Activated T-helper 1 cell treated with anti-CD3 and anti-CD28 coated beads, Interleukin-12 subunit alpha, Interleukin-12 subunit beta, Interleukin-2, Interleukin-4 antibody, amounts not matched to agents 30 ng/mL and 10 ng/mL and 1 ng/mL, durations not matched to agents 14 hours and 24 hours and 36 hours (primary cell): ENCODE measurements at regions of chr1 and their contacts with region 1.

Region 1: DNA sequence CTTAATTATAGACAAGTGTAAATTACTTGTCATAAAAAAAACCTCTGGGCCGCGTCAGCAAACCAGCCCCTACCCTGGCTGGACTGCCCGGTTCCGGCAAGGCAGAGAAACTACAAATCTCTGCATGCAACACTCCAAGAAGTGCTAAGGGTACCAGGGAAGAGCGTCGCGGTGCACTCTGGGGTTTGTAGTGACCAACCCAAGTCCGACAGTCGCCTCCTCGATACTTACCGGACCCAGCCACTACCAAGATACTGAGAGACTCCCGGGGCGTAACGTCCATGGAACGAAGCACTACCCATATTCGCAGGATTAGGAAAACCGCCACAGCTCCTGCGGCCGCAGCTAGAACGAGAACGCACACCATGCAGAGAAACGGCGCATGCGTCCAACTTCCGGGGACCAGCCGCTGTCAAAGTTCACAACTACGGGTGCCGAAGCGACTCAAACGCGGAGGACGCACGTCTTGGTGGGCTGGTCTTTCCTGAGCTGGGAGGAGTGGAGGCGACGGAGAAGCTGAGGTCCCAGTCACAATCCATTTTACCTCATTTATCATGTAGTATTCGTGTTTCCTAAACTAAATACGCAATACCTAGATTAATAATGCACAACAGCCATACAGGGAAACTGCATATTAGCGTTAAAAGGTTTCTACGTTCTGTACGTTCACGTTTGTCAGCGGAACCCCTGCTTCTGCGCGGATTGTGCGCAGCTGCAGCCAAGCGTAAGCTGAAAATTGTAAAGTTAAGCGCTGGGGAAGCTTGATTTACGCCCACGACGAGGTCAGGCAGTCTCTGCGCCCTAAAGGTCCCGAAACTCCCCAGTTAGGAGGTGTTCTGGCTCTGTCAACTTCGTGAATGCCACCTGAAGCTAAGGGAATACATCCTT is at the start of gene ALG14:
- DNase-seq: peak; percentile 85
- H3K4me3 Mint-ChIP-seq: peak within 1 kb of the TSS; percentile 94
- H3K27ac Mint-ChIP-seq: peak within 1 kb of the TSS; percentile 93
- H3K4me1 Mint-ChIP-seq: peaks cover 18% of the 10 kb centered on the region
- H3K27me3 Mint-ChIP-seq: no peaks in the 10 kb centered on the region
- total RNA-seq, gene ALG14: 1.9 and 2.4 TPM in 2 replicates

Region 2: GRCh38 chr1:94417978-94418663 is 654.7 kb before region 1 on chr1 and contains the start of gene ABCD3:
- intact Hi-C with region 1: loop called (anchors 1 kb)
- DNase-seq: peak; percentile 96
- H3K4me3 Mint-ChIP-seq: peak within 1 kb of the TSS; percentile 89
- H3K27ac Mint-ChIP-seq: peak within 1 kb of the TSS; percentile 68
- H3K4me1 Mint-ChIP-seq: peaks cover 31% of the 10 kb centered on the region
- H3K27me3 Mint-ChIP-seq: peaks cover 15% of the 10 kb centered on the region
- total RNA-seq, gene ABCD3: 25.7 and 28.2 TPM in 2 replicates

Region 3: GRCh38 chr1:94962409-94963265 is 110.1 kb before region 1 on chr1:
- intact Hi-C with region 1: loop called (anchors 5 kb)
- DNase-seq: peak; percentile 19
- H3K4me3 Mint-ChIP-seq: peak overlapping the region; percentile 89
- H3K27ac Mint-ChIP-seq: peak overlapping the region; percentile 92
- H3K4me1 Mint-ChIP-seq: peaks cover 5% of the 10 kb centered on the region
- H3K27me3 Mint-ChIP-seq: no peaks in the 10 kb centered on the region

Region 4: GRCh38 chr1:95116580-95117206 is 43.9 kb after region 1 on chr1:
- intact Hi-C with region 1: loop called (anchors 1 kb)
- DNase-seq: no peak
- H3K4me3 Mint-ChIP-seq: peak overlapping the region; percentile 84
- H3K27ac Mint-ChIP-seq: no peak overlapping the region
- H3K4me1 Mint-ChIP-seq: peaks cover 5% of the 10 kb centered on the region
- H3K27me3 Mint-ChIP-seq: peaks cover 53% of the 10 kb centered on the region

Region 5: DNA sequence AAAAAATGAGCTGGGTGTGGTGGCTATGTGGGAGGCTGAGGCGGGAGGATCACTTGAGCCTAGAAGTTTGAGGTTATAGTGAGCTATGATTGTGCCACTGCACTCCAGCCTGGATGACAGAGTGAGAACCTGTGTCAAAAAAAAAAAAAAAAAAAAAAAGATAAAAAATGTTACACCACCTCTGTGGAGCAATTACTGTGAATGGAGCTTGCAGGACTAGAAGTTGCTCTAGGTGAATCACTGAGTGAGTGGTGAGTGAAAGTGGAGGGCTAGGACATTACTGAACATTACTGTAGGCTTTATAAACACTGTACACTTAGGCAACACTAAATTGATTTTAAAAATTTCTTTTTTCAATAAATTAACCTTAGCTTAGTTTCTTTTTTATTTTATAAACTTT is 66.3 kb after region 1 on chr1:
- intact Hi-C with region 1: no loop called
- DNase-seq: no peak
- H3K4me3 Mint-ChIP-seq: no peak overlapping the region
- H3K27ac Mint-ChIP-seq: no peak overlapping the region
- H3K4me1 Mint-ChIP-seq: no peaks in the 10 kb centered on the region
- H3K27me3 Mint-ChIP-seq: peaks cover 6% of the 10 kb centered on the region

Region 6: GRCh38 chr1:96721416-96722160 is 1648.8 kb after region 1 on chr1 and contains the start of gene PTBP2:
- intact Hi-C with region 1: loop called (anchors 5 kb)
- DNase-seq: peak; percentile 79
- H3K4me3 Mint-ChIP-seq: peak within 1 kb of the TSS; percentile 95
- H3K27ac Mint-ChIP-seq: peak within 1 kb of the TSS; percentile 94
- H3K4me1 Mint-ChIP-seq: peaks cover 22% of the 10 kb centered on the region
- H3K27me3 Mint-ChIP-seq: peaks cover 15% of the 10 kb centered on the region
- total RNA-seq, gene PTBP2: 17.7 and 19.7 TPM in 2 replicates